Activated CD4-positive, alpha-beta T cell treated with anti-CD3 and anti-CD28 coated beads, Interleukin-2, amount 10 ng/mL, durations not matched to agents 24 days and 14 days (primary cell): ENCODE measurements at regions of chr21 and their contacts with region 1.

Region 1: DNA sequence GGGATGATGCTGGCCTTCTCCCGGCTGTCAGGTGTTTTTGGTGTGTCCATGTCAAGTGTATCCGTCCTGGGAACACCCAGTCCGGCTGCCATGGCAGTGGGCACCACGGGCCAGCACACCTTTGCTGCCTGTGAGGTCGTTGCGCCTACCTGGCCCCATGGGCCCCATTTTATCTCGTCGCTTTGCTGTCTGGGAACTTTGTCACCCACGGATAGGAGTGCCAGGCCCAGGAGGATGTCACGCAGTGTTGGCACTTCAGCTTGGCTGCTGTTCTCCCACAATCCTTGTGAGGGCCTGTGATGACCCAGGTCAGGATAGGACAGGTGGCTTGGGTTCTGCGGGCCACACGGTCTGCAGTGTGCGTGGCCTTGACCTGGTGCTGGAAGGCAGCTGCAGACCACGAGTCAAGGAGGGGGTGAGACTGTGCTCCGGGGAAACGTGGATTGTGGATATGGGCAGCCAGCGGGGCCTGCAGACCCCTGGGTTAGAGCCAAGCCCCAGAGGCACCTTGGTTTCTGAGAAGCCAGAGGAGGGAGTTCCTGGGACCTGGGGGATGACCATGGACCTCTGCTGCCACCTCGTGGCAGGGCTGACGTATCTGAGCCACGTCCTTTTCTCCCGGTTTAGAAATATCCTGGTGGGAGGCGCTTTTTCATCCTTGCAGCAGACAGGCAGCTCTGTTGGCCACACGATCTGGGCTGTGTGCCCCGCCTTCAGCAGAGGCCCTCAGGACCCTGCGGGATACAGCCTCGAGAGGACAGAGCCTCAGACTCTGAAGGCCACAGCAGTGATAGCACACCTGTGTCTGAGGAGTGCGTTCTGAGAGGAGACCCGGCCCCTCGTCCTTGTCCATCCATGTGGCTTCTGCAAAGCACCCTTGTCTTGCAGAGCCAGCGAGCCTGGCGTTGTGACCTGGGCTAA is 161.1 kb upstream of the COL6A1 start:
- DNase-seq: peak; percentile 93
- H3K4me3 Mint-ChIP-seq: peak overlapping the region; percentile 47
- H3K27ac Mint-ChIP-seq: peak overlapping the region; percentile 81
- H3K4me1 Mint-ChIP-seq: peaks cover 40% of the 10 kb centered on the region
- H3K27me3 Mint-ChIP-seq: no peaks in the 10 kb centered on the region

Region 2: GRCh38 chr21:45287438-45288391 is 532.7 kb before region 1 on chr21 and contains the start of gene POFUT2:
- intact Hi-C with region 1: loop called (anchors 2 kb)
- DNase-seq: peak; percentile 100
- H3K4me3 Mint-ChIP-seq: peak within 1 kb of the TSS; percentile 86
- H3K27ac Mint-ChIP-seq: peak within 1 kb of the TSS; percentile 93
- H3K4me1 Mint-ChIP-seq: peaks cover 13% of the 10 kb centered on the region
- H3K27me3 Mint-ChIP-seq: peaks cover 4% of the 10 kb centered on the region
- total RNA-seq, gene POFUT2: 15.5 and 17.9 TPM in 2 replicates

Region 3: GRCh38 chr21:45554477-45555175 is 265.8 kb before region 1 on chr21:
- intact Hi-C with region 1: loop called (anchors 1 kb)
- DNase-seq: peak; percentile 98
- H3K4me3 Mint-ChIP-seq: peak overlapping the region; percentile 88
- H3K27ac Mint-ChIP-seq: peak overlapping the region; percentile 90
- H3K4me1 Mint-ChIP-seq: peaks cover 25% of the 10 kb centered on the region
- H3K27me3 Mint-ChIP-seq: no peaks in the 10 kb centered on the region

Region 4: GRCh38 chr21:45643021-45643980 is 177.1 kb before region 1 on chr21 and contains the start of gene PCBP3:
- intact Hi-C with region 1: loop called (anchors 1 kb)
- DNase-seq: peak; percentile 98
- H3K4me3 Mint-ChIP-seq: peak within 1 kb of the TSS; percentile 82
- H3K27ac Mint-ChIP-seq: peak within 1 kb of the TSS; percentile 64
- H3K4me1 Mint-ChIP-seq: peaks cover 16% of the 10 kb centered on the region
- H3K27me3 Mint-ChIP-seq: peaks cover 11% of the 10 kb centered on the region
- total RNA-seq, gene PCBP3: 7.5 and 9.7 TPM in 2 replicates

Region 5: GRCh38 chr21:45923146-45923545 is 102.7 kb after region 1 on chr21:
- intact Hi-C with region 1: loop called (anchors 2 kb)
- DNase-seq: peak; percentile 81
- H3K4me3 Mint-ChIP-seq: no peak overlapping the region
- H3K27ac Mint-ChIP-seq: no peak overlapping the region
- H3K4me1 Mint-ChIP-seq: no peaks in the 10 kb centered on the region
- H3K27me3 Mint-ChIP-seq: no peaks in the 10 kb centered on the region